A673 (cell line): ENCODE measurements at regions of chr5 and their contacts with region 1.

Region 1: DNA sequence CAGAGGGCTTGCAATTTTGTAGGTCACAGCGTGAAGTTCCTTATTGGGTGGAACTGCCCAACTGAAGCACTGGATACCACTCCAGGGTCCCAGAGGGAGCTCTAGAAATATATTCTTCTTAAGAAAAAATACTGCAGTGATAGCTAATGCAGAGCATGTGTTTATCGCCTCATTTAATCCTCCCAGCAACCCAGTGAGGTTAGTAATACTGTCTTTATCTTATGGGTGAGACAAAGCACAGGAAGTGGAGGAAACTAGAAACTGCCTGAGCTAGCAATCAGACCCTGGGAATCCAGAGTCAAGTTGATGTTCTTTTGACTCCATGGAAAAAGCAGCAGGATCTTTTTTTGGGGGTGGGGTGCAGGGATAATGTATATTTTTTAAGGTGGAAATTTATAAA is 153.3 kb downstream of the PJA2 start:
- DNase-seq: peak; percentile 98
- H3K4me3 ChIP-seq: no peak overlapping the region
- H3K27ac ChIP-seq: peak overlapping the region; percentile 74
- H3K4me1 ChIP-seq: peaks cover 37% of the 10 kb centered on the region
- H3K27me3 ChIP-seq: no peaks in the 10 kb centered on the region
- CTCF ChIP-seq: 0 out of 2 replicates have a peak, but pooled peaks have one; percentile 12

Region 2: GRCh38 chr5:109105631-109106267 is 150.7 kb before region 1 on chr5:
- CTCF ChIA-PET with region 1: no interaction called
- POLR2A ChIA-PET with region 1: no interaction called
- intact Hi-C with region 1: loop called (anchors 5 kb)
- DNase-seq: peak; percentile 97
- H3K4me3 ChIP-seq: no peak overlapping the region
- H3K27ac ChIP-seq: peak overlapping the region; percentile 65
- H3K4me1 ChIP-seq: peaks cover 37% of the 10 kb centered on the region
- H3K27me3 ChIP-seq: no peaks in the 10 kb centered on the region
- CTCF ChIP-seq: no peak

Region 3: GRCh38 chr5:109186759-109187158 is 69.7 kb before region 1 on chr5:
- CTCF ChIA-PET with region 1: no interaction called
- POLR2A ChIA-PET with region 1: no interaction called
- intact Hi-C with region 1: no loop called
- DNase-seq: no peak
- H3K4me3 ChIP-seq: no peak overlapping the region
- H3K27ac ChIP-seq: no peak overlapping the region
- H3K4me1 ChIP-seq: peaks cover 29% of the 10 kb centered on the region
- H3K27me3 ChIP-seq: no peaks in the 10 kb centered on the region
- CTCF ChIP-seq: no peak

Region 4: GRCh38 chr5:109455598-109456096 is 199.2 kb after region 1 on chr5:
- CTCF ChIA-PET with region 1: no interaction called
- POLR2A ChIA-PET with region 1: no interaction called
- intact Hi-C with region 1: loop called (anchors 10 kb)
- DNase-seq: peak; percentile 89
- H3K4me3 ChIP-seq: no peak overlapping the region
- H3K27ac ChIP-seq: peak overlapping the region; percentile 62
- H3K4me1 ChIP-seq: peaks cover 23% of the 10 kb centered on the region
- H3K27me3 ChIP-seq: no peaks in the 10 kb centered on the region
- CTCF ChIP-seq: no peak